A549 (cell line): ENCODE measurements at regions of chr17 and their contacts with region 1.

Region 1: GRCh38 chr17:58658804-58659713 is 32.8 kb downstream of the TEX14 start:
- DNase-seq: peak; percentile 92 to 95
- ATAC-seq: peak; percentile 92 to 95
- H3K4me3 ChIP-seq: peak overlapping the region; percentile 56
- H3K27ac ChIP-seq: peak overlapping the region; percentile 88 to 89
- H3K4me1 ChIP-seq: peaks cover 3% of the 10 kb centered on the region; the same call in 1 of the 3 replicates
- CTCF ChIP-seq: no peak; the same call in 2 of the 3 replicates
- EP300 ChIP-seq: peak in 1 of 2 experiments; percentile 46; a peak in 1 of 5 replicates
- POLR2A ChIP-seq: peak; percentile 100
- RAD21 ChIP-seq: peak; percentile 10 to 45; a peak in 3 of 5 replicates

Region 2: DNA sequence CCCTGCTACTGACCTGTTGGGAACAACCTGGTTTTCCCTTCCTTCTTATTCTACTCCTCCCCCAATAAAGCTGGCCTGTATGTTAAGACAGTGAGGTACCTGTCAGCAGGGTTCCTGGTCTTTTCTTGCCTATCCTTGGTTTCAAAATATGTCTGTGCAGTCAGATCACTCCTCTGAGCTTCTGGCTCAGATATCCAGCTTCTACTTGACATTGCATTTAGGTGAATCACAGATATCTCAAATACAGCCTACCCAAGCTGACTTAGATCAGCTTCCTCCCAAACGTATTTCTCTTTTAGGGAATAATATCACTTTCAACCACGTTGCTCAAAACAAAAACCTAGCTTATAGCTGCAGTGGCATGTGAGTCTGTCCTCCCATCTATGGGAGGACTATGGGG is 15.9 kb before region 1 on chr17:
- CTCF ChIA-PET with region 1: interaction called, 3 read pairs
- POLR2A ChIA-PET with region 1: interaction called, 13 read pairs
- DNase-seq: peak; percentile 56 to 57
- ATAC-seq: peak; percentile 87 to 90
- H3K4me3 ChIP-seq: no peak overlapping the region
- H3K27ac ChIP-seq: peak overlapping the region; percentile 18 to 72; a peak in 3 of 6 replicates
- H3K4me1 ChIP-seq: peaks cover 20% of the 10 kb centered on the region
- CTCF ChIP-seq: no peak
- EP300 ChIP-seq: no peak
- POLR2A ChIP-seq: no peak
- RAD21 ChIP-seq: no peak

Region 3: GRCh38 chr17:58728786-58729185 is 69.7 kb after region 1 on chr17:
- CTCF ChIA-PET with region 1: no interaction called
- POLR2A ChIA-PET with region 1: no interaction called
- DNase-seq: no peak
- ATAC-seq: no peak
- H3K4me3 ChIP-seq: no peak overlapping the region
- H3K27ac ChIP-seq: no peak overlapping the region
- H3K4me1 ChIP-seq: no peaks in the 10 kb centered on the region
- CTCF ChIP-seq: no peak
- EP300 ChIP-seq: no peak
- POLR2A ChIP-seq: no peak
- RAD21 ChIP-seq: no peak